ENCODE measurements at regions of chr1 and their contacts with region 1.

Region 1: GRCh38 chr1:207828485-207829158 is 76.8 kb downstream of the CD46 start:
- DNase-seq: peak; percentile 96
- H3K4me3 ChIP-seq: peak overlapping the region in 1 of 7 experiments; percentile 30
- H3K27ac ChIP-seq: peak overlapping the region in 1 of 2 experiments; percentile 37
- H3K4me1 ChIP-seq: peaks cover 54 to 92% (median 87%) of the 10 kb centered on the region in 4 experiments
- H3K27me3 ChIP-seq: no peaks in the 10 kb centered on the region

Region 2: GRCh38 chr1:207603777-207604176 is 224.8 kb before region 1 on chr1:
- CTCF ChIA-PET with region 1: no interaction called
- POLR2A ChIA-PET with region 1: no interaction called
- DNase-seq: no peak
- H3K4me3 ChIP-seq: no peak overlapping the region
- H3K27ac ChIP-seq: no peak overlapping the region
- H3K4me1 ChIP-seq: no peaks in the 10 kb centered on the region
- H3K27me3 ChIP-seq: no peaks in the 10 kb centered on the region

Region 3: GRCh38 chr1:207811920-207812720 is 16.5 kb before region 1 on chr1:
- CTCF ChIA-PET with region 1: interaction called, 27 read pairs
- POLR2A ChIA-PET with region 1: interaction called, 3 read pairs
- DNase-seq: no peak
- H3K4me3 ChIP-seq: no peak overlapping the region
- H3K27ac ChIP-seq: no peak overlapping the region
- H3K4me1 ChIP-seq: peaks cover 0 to 37% (median 26%) of the 10 kb centered on the region in 4 experiments
- H3K27me3 ChIP-seq: no peaks in the 10 kb centered on the region

Region 4: GRCh38 chr1:207868774-207869721 is 40.4 kb after region 1 on chr1:
- CTCF ChIA-PET with region 1: interaction called, 1,057 read pairs
- POLR2A ChIA-PET with region 1: interaction called, 5 read pairs
- DNase-seq: peak; percentile 65 to 77 (median 73)
- H3K4me3 ChIP-seq: peak overlapping the region; percentile 70 to 91 (median 86)
- H3K27ac ChIP-seq: peak overlapping the region; percentile 42 to 76
- H3K4me1 ChIP-seq: peaks cover 17 to 94% (median 82%) of the 10 kb centered on the region in 4 experiments
- H3K27me3 ChIP-seq: no peaks in the 10 kb centered on the region

Region 5: GRCh38 chr1:208159555-208160258 is 331.1 kb after region 1 on chr1:
- CTCF ChIA-PET with region 1: no interaction called
- POLR2A ChIA-PET with region 1: no interaction called
- DNase-seq: no peak
- H3K4me3 ChIP-seq: no peak overlapping the region
- H3K27ac ChIP-seq: no peak overlapping the region
- H3K4me1 ChIP-seq: peaks cover 0 to 9% (median 5%) of the 10 kb centered on the region in 4 experiments
- H3K27me3 ChIP-seq: no peaks in the 10 kb centered on the region